Mammary epithelial cell (primary cell): ENCODE measurements at regions of chr17 and their contacts with region 1.

Region 1: GRCh38 chr17:65593855-65594845 is 32.7 kb upstream of the AXIN2 start:
- DNase-seq: no peak
- H3K4me3 ChIP-seq: no peak overlapping the region
- H3K27ac ChIP-seq: no peak overlapping the region
- H3K4me1 ChIP-seq: no peaks in the 10 kb centered on the region
- H3K27me3 ChIP-seq: no peaks in the 10 kb centered on the region
- CTCF ChIP-seq: no peak

Region 2: GRCh38 chr17:65438708-65439294 is 155.3 kb before region 1 on chr17:
- CTCF ChIA-PET with region 1: no interaction called
- dilution Hi-C with region 1: no loop called
- in situ Hi-C with region 1: no loop called
- intact Hi-C with region 1: no loop called
- DNase-seq: no peak
- H3K4me3 ChIP-seq: no peak overlapping the region
- H3K27ac ChIP-seq: no peak overlapping the region
- H3K4me1 ChIP-seq: no peaks in the 10 kb centered on the region
- H3K27me3 ChIP-seq: no peaks in the 10 kb centered on the region
- CTCF ChIP-seq: no peak

Region 3: GRCh38 chr17:65531263-65532100 is 62.7 kb before region 1 on chr17:
- CTCF ChIA-PET with region 1: no interaction called
- dilution Hi-C with region 1: loop called (anchors 10 kb)
- in situ Hi-C with region 1: no loop called
- intact Hi-C with region 1: no loop called
- DNase-seq: no peak
- H3K4me3 ChIP-seq: no peak overlapping the region
- H3K27ac ChIP-seq: no peak overlapping the region
- H3K4me1 ChIP-seq: no peaks in the 10 kb centered on the region
- H3K27me3 ChIP-seq: no peaks in the 10 kb centered on the region
- CTCF ChIP-seq: no peak

Region 4: GRCh38 chr17:65561394-65562205 is 32.5 kb before region 1 on chr17 and contains the start of gene AXIN2:
- CTCF ChIA-PET with region 1: no interaction called
- dilution Hi-C with region 1: no loop called
- in situ Hi-C with region 1: no loop called
- intact Hi-C with region 1: no loop called
- DNase-seq: peak; percentile 80
- H3K4me3 ChIP-seq: peak within 1 kb of the TSS; percentile 51 to 70 (median 54)
- H3K27ac ChIP-seq: no peak within 1 kb of the TSS
- H3K4me1 ChIP-seq: peaks cover 10% of the 10 kb centered on the region
- H3K27me3 ChIP-seq: peaks cover 21% of the 10 kb centered on the region
- CTCF ChIP-seq: peak; percentile 8 to 13
- total RNA-seq, gene AXIN2: 0.14 to 0.67 TPM

Region 5: GRCh38 chr17:65609299-65609698 is 15.1 kb after region 1 on chr17:
- CTCF ChIA-PET with region 1: no interaction called
- dilution Hi-C with region 1: no loop called
- in situ Hi-C with region 1: no loop called
- intact Hi-C with region 1: no loop called
- DNase-seq: no peak
- H3K4me3 ChIP-seq: no peak overlapping the region
- H3K27ac ChIP-seq: no peak overlapping the region
- H3K4me1 ChIP-seq: no peaks in the 10 kb centered on the region
- H3K27me3 ChIP-seq: no peaks in the 10 kb centered on the region
- CTCF ChIP-seq: no peak